Esophagus muscularis mucosa (tissue), 4 donors: ENCODE measurements at regions of chr7 and their contacts with region 1.

Region 1: GRCh38 chr7:1664711-1665548 is 5.1 kb upstream of the ELFN1 start:
- DNase-seq: no peak
- H3K4me3 ChIP-seq: peak overlapping the region; percentile 52 to 70 (median 62)
- H3K27ac ChIP-seq: peak overlapping the region; percentile 33 to 54 (median 38)
- H3K4me1 ChIP-seq: peaks cover 41 to 54% (median 51%) of the 10 kb centered on the region in 4 donors
- H3K27me3 ChIP-seq: peaks cover 6 to 92% (median 58%) of the 10 kb centered on the region in 4 donors
- CTCF ChIP-seq: peak; percentile 68 to 89 (median 77)
- EP300 ChIP-seq: no peak
- POLR2A ChIP-seq: no peak

Region 2: GRCh38 chr7:1758028-1758858 is 93.3 kb after region 1 on chr7:
- intact Hi-C with region 1: loop called (anchors 10 kb)
- DNase-seq: no peak
- H3K4me3 ChIP-seq: no peak overlapping the region
- H3K27ac ChIP-seq: no peak overlapping the region
- H3K4me1 ChIP-seq: no peaks in the 10 kb centered on the region
- H3K27me3 ChIP-seq: peaks cover 0 to 54% (median 0%) of the 10 kb centered on the region in 4 donors
- CTCF ChIP-seq: peak in 2 of 3 experiments; percentile 32 to 36
- EP300 ChIP-seq: no peak
- POLR2A ChIP-seq: no peak

Region 3: DNA sequence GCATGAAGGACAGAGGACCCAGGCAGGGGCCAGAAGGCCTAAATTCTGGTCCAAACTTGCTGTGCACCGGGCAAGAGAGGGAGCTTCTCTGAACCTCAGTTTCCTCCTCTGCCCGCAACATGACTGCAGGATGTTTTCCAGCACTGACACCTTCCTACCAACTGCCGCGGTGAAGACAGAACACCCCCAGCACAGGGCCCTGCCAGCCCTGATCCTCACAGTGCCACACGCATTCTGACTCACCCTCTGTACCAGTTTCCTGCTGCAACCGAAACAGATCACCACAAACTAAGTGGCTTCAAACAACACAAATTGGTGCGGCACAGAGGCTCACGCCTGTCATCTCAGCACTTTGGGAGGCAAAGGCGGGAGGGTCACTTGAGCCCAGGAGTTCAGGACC is 549.7 kb after region 1 on chr7:
- intact Hi-C with region 1: loop called (anchors 5 kb)
- DNase-seq: no peak
- H3K4me3 ChIP-seq: no peak overlapping the region
- H3K27ac ChIP-seq: no peak overlapping the region
- H3K4me1 ChIP-seq: peaks cover 1 to 5% (median 2%) of the 10 kb centered on the region in 4 donors
- H3K27me3 ChIP-seq: no peaks in the 10 kb centered on the region
- CTCF ChIP-seq: no peak
- EP300 ChIP-seq: no peak
- POLR2A ChIP-seq: no peak